ENCODE measurements at regions of chr14 and their contacts with region 1.

Region 1: DNA sequence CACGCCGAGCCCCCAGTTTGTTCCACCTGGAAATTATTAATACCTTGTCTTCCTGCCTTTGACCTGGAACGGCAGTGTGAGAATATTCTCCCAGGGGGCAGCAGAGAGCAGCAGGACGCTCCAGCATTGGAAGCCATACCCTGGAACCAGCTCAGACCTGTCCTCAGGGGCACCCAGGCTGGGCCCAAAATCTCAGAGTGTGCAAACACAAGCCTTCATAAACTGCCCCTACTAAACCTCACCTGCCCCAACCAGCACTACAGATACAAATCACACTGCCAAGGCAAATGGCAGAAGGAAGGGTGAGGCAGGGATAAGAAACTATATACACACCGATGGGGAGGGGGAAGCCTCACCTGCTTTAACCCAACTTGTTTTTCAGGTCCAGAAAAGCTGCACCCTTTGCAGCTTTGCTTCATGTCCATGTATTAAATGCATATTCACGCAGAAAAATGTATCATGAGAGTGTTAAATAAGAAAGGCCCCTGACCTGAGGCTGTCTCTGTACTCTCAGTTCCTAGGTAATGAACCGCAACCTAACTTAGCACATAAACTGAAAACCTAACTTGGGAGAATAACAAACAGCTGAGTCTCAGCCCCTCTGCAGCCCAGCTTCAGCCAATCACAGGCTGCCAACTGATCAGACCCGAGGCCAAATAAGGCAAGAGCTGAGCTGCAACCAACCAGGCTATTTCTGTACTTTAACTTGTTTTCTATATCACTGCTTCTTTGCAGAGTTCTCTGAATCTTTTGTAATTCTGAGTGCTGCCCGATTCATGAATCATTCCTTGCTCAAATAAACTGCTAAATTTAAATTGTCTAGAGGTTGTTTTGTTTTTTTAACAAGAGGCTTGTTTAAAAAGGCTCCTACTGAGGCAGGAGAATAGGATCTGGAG is 130.1 kb downstream of the SPTSSA start:
- H3K4me3 ChIP-seq: no peak overlapping the region
- H3K27ac ChIP-seq: no peak overlapping the region
- H3K4me1 ChIP-seq: no peaks in the 10 kb centered on the region
- CTCF ChIP-seq: peak; percentile 42; the same call in 1 of the 2 replicates

Region 2: DNA sequence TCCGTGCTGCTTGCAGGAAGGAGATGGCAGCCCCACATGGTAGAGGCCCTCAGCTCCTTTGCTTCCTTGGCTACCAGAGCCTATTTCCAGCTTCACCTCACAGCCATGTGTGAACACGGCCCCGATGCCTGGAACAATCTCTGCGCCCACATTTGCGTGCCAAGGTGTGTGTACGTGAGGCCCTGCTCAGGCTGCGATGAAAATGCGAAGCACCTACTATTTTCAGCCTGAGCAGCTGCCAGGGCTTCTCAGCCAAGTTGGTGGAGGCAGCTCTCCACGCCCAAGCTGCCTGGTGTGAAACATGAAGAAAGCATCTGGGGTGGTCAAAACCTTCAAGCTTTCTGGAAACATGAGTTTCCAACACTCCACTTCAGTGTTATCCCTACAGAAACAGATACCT is 203.3 kb before region 1 on chr14:
- CTCF ChIA-PET with region 1: no interaction called
- POLR2A ChIA-PET with region 1: no interaction called
- H3K4me3 ChIP-seq: no peak overlapping the region
- H3K27ac ChIP-seq: no peak overlapping the region
- H3K4me1 ChIP-seq: no peaks in the 10 kb centered on the region
- CTCF ChIP-seq: no peak

Region 3: GRCh38 chr14:34361450-34362011 is 29.6 kb after region 1 on chr14:
- CTCF ChIA-PET with region 1: interaction called, 10 read pairs
- POLR2A ChIA-PET with region 1: no interaction called
- H3K4me3 ChIP-seq: no peak overlapping the region
- H3K27ac ChIP-seq: no peak overlapping the region
- H3K4me1 ChIP-seq: no peaks in the 10 kb centered on the region
- CTCF ChIP-seq: no peak

Measured in HEK293 (cell line).